ENCODE measurements at regions of chr17 and their contacts with region 1.

Region 1: GRCh38 chr17:81394921-81395599 is at the start of gene BAHCC1:
- DNase-seq: peak; percentile 100
- H3K4me3 ChIP-seq: peak within 1 kb of the TSS; percentile 88 to 97
- H3K27ac ChIP-seq: peak within 1 kb of the TSS; percentile 86 to 99
- H3K4me1 ChIP-seq: peaks cover 10% of the 10 kb centered on the region
- H3K27me3 ChIP-seq: no peaks in the 10 kb centered on the region
- CTCF ChIP-seq: peak in 2 of 4 experiments; percentile 8 to 24
- POLR2A ChIP-seq: peak; percentile 97
- total RNA-seq, gene BAHCC1: 11.4 to 28.9 TPM

Region 2: GRCh38 chr17:81165246-81166032 is 229.6 kb before region 1 on chr17 and contains the start of gene PVALEF:
- intact Hi-C with region 1: no loop called
- DNase-seq: no peak
- H3K4me3 ChIP-seq: peak within 1 kb of the TSS; percentile 28 to 41
- H3K27ac ChIP-seq: peak within 1 kb of the TSS in 1 of 2 donors; percentile 17
- H3K4me1 ChIP-seq: peaks cover 10% of the 10 kb centered on the region
- H3K27me3 ChIP-seq: no peaks in the 10 kb centered on the region
- CTCF ChIP-seq: no peak
- POLR2A ChIP-seq: no peak
- total RNA-seq, gene PVALEF: not detected

Region 3: DNA sequence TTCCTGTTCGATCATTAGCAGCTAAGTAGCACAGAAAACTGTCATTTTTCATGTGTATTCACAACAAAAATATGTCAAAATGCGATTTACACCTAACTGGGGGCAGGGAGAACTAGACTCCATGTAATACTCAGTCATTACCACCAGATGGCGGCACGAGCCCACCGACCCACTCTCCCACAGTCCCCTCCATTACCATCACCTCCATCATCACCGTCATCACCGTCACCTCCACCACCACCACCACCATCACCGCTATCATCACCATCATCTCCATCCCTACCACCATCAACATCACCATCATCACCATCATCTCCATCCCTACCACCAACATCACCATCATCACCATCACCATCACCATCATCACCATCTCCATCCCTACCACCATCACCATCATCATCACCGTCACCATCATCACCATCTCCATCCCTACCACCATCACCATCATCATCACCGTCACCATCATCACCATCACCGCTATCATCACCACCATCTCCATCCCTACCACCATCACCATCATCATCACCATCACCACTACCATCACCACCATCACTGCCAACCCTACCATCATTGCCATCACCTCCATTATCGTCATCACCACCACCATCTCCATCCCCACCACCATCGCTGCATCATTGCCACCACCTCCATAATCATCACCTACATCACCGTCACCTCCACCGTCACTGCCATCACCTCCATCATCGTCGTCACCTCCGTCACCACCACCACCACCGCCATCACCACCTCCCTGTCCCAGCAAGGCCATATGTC is 141.5 kb before region 1 on chr17:
- intact Hi-C with region 1: loop called (anchors 5 kb)
- DNase-seq: peak; percentile 37
- H3K4me3 ChIP-seq: no peak overlapping the region
- H3K27ac ChIP-seq: no peak overlapping the region
- H3K4me1 ChIP-seq: peaks cover 7% of the 10 kb centered on the region
- H3K27me3 ChIP-seq: no peaks in the 10 kb centered on the region
- CTCF ChIP-seq: peak; percentile 76 to 93 (median 88)
- POLR2A ChIP-seq: no peak

Region 4: DNA sequence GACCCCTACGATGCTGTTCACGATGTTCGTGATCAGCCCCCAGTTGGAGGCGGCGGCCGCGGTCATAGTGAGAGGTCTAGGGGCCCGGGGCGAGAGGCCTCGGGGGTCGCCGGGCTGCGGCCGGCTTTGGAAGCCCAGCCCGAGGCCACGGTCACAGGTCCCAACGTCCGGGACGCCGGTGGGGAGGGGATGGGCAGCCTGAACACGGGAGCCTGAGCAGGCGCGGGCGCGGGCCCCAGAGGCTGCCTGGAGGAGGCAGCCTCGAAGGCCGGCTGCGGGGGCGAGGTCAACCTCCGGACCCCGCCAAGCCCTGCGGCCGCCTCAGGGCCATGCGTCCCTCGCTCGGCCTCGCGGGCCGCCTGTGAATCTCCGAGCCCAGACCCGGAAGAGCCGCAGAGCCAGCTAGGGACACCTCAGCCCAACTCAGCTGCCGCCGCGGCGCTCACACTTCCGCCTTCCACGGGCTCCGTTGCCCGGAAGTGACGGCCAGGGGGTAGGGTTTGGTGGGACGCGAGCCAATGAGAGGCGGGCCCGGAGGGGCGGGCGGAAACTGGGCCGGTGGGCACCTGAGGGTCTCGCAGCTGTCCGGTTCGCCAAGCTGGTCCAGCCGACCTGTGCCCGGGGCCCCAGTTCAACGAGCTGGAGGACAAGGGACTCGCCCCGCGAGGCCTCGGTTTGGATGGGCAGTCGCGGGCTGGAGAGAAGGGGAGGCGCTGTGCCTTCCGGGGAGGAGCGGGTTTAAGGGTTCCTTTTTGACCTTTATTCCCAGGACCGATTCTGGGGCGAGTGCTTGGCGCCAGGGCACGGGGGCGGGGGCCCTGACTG is 100.0 kb before region 1 on chr17 and contains the start of gene SLC38A10:
- intact Hi-C with region 1: loop called (anchors 2 kb)
- DNase-seq: peak; percentile 88
- H3K4me3 ChIP-seq: peak within 1 kb of the TSS; percentile 75 to 90
- H3K27ac ChIP-seq: peak within 1 kb of the TSS; percentile 87 to 95
- H3K4me1 ChIP-seq: peaks cover 2% of the 10 kb centered on the region
- H3K27me3 ChIP-seq: no peaks in the 10 kb centered on the region
- CTCF ChIP-seq: peak in 3 of 4 experiments; percentile 25 to 40 (median 27)
- POLR2A ChIP-seq: peak; percentile 96
- total RNA-seq, gene SLC38A10: 104 to 167 TPM

Region 5: GRCh38 chr17:81342269-81343070 is 52.6 kb before region 1 on chr17:
- intact Hi-C with region 1: loop called (anchors 1 kb)
- DNase-seq: no peak
- H3K4me3 ChIP-seq: peak overlapping the region; percentile 83 to 90
- H3K27ac ChIP-seq: peak overlapping the region; percentile 99 to 100
- H3K4me1 ChIP-seq: peaks cover 15% of the 10 kb centered on the region
- H3K27me3 ChIP-seq: no peaks in the 10 kb centered on the region
- CTCF ChIP-seq: no peak
- POLR2A ChIP-seq: no peak

Region 6: GRCh38 chr17:81471804-81472456 is 76.9 kb after region 1 on chr17:
- intact Hi-C with region 1: loop called (anchors 5 kb)
- DNase-seq: peak; percentile 42
- H3K4me3 ChIP-seq: no peak overlapping the region
- H3K27ac ChIP-seq: no peak overlapping the region
- H3K4me1 ChIP-seq: no peaks in the 10 kb centered on the region
- H3K27me3 ChIP-seq: no peaks in the 10 kb centered on the region
- CTCF ChIP-seq: peak in 2 of 4 experiments; percentile 42 to 59
- POLR2A ChIP-seq: no peak

Region 7: GRCh38 chr17:81502471-81503017 is 107.5 kb after region 1 on chr17:
- intact Hi-C with region 1: no loop called
- DNase-seq: no peak
- H3K4me3 ChIP-seq: no peak overlapping the region
- H3K27ac ChIP-seq: no peak overlapping the region
- H3K4me1 ChIP-seq: no peaks in the 10 kb centered on the region
- H3K27me3 ChIP-seq: no peaks in the 10 kb centered on the region
- CTCF ChIP-seq: no peak
- POLR2A ChIP-seq: no peak

Region 8: DNA sequence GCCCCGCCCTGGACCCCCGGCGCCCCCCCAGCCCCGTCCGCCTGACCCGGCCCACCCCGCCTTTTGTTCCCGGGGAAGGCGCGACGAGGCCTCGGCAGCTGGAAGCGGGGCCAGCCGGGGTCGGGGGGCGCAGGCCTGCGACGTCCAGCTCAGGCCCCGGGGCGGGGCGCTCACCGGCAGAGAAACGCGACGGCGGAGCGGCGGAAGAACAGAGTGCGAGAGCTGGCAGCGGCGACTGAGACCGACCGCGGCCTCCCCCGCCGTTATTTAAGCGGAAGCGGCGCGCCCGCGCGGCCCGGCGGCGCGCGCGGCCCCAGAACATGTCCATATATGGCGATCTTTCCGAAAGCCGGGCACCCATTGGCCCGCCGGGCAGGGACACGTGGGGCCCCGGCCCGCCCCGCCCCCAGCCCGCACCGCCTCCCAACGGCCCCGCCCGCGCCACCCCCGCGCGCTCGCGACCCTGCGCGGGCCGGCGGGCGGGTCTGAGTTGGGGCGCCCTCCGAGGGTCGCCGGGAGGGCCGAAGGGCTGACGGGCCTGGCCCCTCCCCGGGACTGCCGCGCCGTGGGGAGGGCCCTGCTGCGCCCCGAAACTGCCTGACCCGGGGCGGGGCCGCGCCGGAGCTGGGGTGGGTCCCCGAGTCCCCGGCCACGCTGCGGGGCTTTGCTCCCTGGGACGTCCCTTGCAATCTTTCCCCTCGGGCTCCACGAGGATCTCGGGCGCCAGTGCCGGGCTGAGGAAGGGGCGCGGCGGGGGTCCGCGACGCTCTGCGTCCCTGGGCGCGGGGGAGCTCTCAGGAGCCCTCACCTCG is 117.7 kb after region 1 on chr17 and contains the start of gene ACTG1:
- intact Hi-C with region 1: loop called (anchors 5 kb)
- DNase-seq: peak; percentile 93
- H3K4me3 ChIP-seq: peak within 1 kb of the TSS; percentile 89 to 97
- H3K27ac ChIP-seq: peak within 1 kb of the TSS; percentile 100
- H3K4me1 ChIP-seq: peaks cover 5% of the 10 kb centered on the region
- H3K27me3 ChIP-seq: no peaks in the 10 kb centered on the region
- CTCF ChIP-seq: no peak
- POLR2A ChIP-seq: peak; percentile 93
- total RNA-seq, gene ACTG1: 2,438 to 3,181 TPM

Measured in prostate gland (tissue), 2 donors.